K562 (cell line): ENCODE measurements at regions of chr2 and their contacts with region 1.

Region 1: DNA sequence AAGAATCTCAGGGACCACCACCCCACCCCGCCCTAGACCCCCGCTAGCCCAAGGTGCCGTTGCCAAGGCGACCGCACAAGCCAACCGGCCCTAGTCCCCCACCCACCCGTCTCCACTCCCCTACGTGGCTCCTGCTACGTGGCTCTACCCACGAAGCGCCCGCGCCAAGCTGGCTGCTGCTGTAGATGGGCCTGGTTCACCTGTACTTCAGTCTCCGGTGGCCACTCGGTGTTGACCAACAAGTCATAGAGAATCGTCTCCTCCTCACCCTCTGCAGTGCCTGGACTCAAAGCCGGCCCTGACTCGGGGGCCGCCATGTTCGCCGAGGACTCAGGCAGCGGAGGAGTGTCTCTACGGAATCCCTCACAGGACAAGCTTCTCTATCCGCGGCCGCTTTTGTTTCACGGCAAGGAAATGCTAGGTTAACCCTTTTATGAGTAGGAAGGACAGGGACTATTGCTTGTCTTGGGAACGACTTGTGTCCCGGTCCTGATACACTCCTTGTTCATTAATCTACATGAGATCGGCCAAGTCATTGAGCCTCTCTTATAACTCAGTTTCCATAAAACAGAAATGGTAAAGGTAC is at the start of gene NBAS:
- DNase-seq: peak; percentile 73 to 90 (median 78)
- ATAC-seq: peak; percentile 52
- H3K4me3 ChIP-seq: peak within 1 kb of the TSS; percentile 76
- H3K27ac ChIP-seq: peak within 1 kb of the TSS; percentile 95
- H3K4me1 ChIP-seq: peaks cover 22 to 41% of the 10 kb centered on the region in 2 experiments
- H3K27me3 ChIP-seq: no peaks in the 10 kb centered on the region
- CTCF ChIP-seq: no peak; a peak in 1 of 6 replicates
- EP300 ChIP-seq: peak; percentile 60
- POLR2A ChIP-seq: peak; percentile 74
- RAD21 ChIP-seq: 0 out of 4 replicates have a peak, but pooled peaks of 1 of the 2 experiments have one; percentile 25
- polyA plus RNA-seq, gene NBAS: 15.3 to 33.5 TPM

Region 2: DNA sequence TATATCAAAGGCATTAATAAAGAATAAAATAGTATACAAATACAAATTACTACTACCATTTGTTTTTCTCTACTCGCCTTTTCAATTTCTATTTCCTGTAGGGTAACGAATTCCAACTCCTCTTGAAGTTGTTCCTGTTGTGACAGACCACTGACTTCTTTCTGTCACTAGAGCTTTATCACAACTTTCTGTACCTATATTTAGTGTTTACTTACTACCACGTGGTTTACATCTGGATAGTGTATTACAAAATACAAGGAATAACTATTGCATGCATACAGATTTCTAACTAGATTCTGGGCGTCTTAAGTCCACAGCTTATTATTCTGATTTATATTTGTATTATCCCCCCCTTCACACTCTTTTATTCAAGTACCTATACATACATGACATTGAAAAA is 22.3 kb before region 1 on chr2:
- CTCF ChIA-PET with region 1: no interaction called
- POLR2A ChIA-PET with region 1: interaction called, 10 read pairs
- in situ Hi-C with region 1: no loop called
- intact Hi-C with region 1: no loop called
- DNase-seq: no peak
- ATAC-seq: peak; percentile 8; the same call in 2 of the 3 replicates
- H3K4me3 ChIP-seq: no peak overlapping the region
- H3K27ac ChIP-seq: peak overlapping the region; percentile 34; the same call in 1 of the 3 replicates
- H3K4me1 ChIP-seq: peaks cover 0 to 9% of the 10 kb centered on the region in 2 experiments; a peak in 2 of 5 replicates
- H3K27me3 ChIP-seq: no peaks in the 10 kb centered on the region
- CTCF ChIP-seq: no peak
- EP300 ChIP-seq: no peak
- POLR2A ChIP-seq: no peak
- RAD21 ChIP-seq: no peak

Region 3: GRCh38 chr2:15546297-15547098 is 14.6 kb before region 1 on chr2:
- CTCF ChIA-PET with region 1: no interaction called
- POLR2A ChIA-PET with region 1: interaction called, 13 read pairs
- in situ Hi-C with region 1: no loop called
- intact Hi-C with region 1: no loop called
- DNase-seq: peak in 1 of 4 experiments; percentile 52
- ATAC-seq: peak; percentile 75
- H3K4me3 ChIP-seq: no peak overlapping the region
- H3K27ac ChIP-seq: no peak overlapping the region
- H3K4me1 ChIP-seq: peaks cover 0 to 7% of the 10 kb centered on the region in 2 experiments; a peak in 2 of 5 replicates
- H3K27me3 ChIP-seq: no peaks in the 10 kb centered on the region
- CTCF ChIP-seq: peak; percentile 40 to 69 (median 46); a peak in 5 of 6 replicates
- EP300 ChIP-seq: no peak
- POLR2A ChIP-seq: no peak
- RAD21 ChIP-seq: peak; percentile 26 to 55; a peak in 3 of 4 replicates

Region 4: DNA sequence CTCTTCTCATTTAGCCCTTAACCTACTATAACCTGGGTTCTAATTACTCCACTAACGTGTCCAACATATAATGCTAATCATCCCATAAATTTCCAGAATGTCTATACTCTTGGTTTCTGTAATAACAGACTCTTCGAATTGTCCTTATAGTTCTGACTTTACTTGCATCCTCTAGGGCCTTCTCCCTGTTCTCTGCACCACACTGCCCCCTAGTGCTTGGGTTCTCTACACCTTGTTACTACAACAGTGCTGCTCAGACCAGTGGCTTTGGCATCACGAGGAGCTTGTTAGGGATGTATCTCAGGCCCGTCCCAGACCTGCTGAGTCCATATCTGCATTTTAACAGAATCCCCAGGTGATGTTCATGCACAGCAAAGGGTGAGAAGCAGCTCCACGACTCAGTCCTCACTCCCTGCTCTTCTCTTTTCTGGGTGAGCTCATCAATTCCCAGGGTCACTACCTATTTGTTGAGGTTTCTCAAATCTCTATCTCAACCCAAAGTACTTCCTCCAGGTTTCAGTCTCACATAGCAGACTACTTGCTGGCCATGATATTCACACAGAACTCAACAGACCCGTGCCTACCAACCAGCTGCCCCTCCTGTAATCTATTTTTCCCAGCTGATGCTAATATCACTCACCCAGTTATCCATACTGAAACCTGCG is 16.1 kb after region 1 on chr2:
- CTCF ChIA-PET with region 1: no interaction called
- POLR2A ChIA-PET with region 1: interaction called, 17 read pairs
- in situ Hi-C with region 1: no loop called
- intact Hi-C with region 1: no loop called
- DNase-seq: peak; percentile 69 to 94 (median 74)
- ATAC-seq: peak; percentile 97
- H3K4me3 ChIP-seq: no peak overlapping the region
- H3K27ac ChIP-seq: no peak overlapping the region
- H3K4me1 ChIP-seq: peaks cover 3 to 5% of the 10 kb centered on the region in 2 experiments; a peak in 3 of 5 replicates
- H3K27me3 ChIP-seq: no peaks in the 10 kb centered on the region
- CTCF ChIP-seq: peak; percentile 92 to 95 (median 92)
- EP300 ChIP-seq: no peak
- POLR2A ChIP-seq: no peak
- RAD21 ChIP-seq: peak; percentile 87 to 97